Calu3 (cell line): ENCODE measurements at regions of chr16 and their contacts with region 1.

Region 1: GRCh38 chr16:68406451-68407152 is 41.7 kb downstream of the SMPD3 start:
- DNase-seq: no peak
- H3K4me3 Mint-ChIP-seq: no peak overlapping the region
- H3K27ac Mint-ChIP-seq: no peak overlapping the region
- H3K4me1 Mint-ChIP-seq: peaks cover 6% of the 10 kb centered on the region
- H3K27me3 Mint-ChIP-seq: peaks cover 17% of the 10 kb centered on the region
- CTCF ChIP-seq: no peak

Region 2: DNA sequence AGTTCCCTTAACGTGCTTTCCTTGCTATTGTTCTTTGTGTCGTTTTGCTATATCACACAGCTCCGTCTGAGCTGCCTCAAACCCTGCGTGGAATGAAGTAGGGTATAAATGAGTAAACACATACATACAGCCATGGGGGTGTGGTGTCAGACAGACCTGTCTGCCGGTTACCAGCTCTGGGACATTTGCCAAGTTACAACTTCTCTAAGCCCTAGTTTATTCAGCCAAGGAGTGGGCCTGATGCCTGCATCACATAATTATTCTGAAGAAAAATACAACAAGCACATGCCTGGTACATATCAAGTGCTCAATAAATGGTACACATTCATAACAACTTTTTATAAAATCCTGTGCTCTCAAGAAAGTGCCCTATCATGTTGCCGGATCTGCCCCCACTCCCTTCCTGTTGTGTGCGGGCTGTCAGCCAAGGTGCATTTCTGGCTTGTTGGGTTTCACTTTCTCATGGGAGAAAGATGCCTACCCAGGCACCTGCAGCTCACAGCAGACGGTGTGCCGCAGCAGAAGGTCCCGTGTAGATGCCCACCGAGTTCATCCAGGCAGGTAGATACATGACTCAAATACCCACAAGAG is 11.2 kb after region 1 on chr16:
- CTCF ChIA-PET with region 1: interaction called, 11 read pairs
- intact Hi-C with region 1: no loop called
- DNase-seq: peak; percentile 79
- H3K4me3 Mint-ChIP-seq: peak overlapping the region; percentile 39
- H3K27ac Mint-ChIP-seq: peak overlapping the region; percentile 23
- H3K4me1 Mint-ChIP-seq: peaks cover 44% of the 10 kb centered on the region
- H3K27me3 Mint-ChIP-seq: no peaks in the 10 kb centered on the region
- CTCF ChIP-seq: no peak